ENCODE measurements at regions of chr4 and their contacts with region 1.

Region 1: DNA sequence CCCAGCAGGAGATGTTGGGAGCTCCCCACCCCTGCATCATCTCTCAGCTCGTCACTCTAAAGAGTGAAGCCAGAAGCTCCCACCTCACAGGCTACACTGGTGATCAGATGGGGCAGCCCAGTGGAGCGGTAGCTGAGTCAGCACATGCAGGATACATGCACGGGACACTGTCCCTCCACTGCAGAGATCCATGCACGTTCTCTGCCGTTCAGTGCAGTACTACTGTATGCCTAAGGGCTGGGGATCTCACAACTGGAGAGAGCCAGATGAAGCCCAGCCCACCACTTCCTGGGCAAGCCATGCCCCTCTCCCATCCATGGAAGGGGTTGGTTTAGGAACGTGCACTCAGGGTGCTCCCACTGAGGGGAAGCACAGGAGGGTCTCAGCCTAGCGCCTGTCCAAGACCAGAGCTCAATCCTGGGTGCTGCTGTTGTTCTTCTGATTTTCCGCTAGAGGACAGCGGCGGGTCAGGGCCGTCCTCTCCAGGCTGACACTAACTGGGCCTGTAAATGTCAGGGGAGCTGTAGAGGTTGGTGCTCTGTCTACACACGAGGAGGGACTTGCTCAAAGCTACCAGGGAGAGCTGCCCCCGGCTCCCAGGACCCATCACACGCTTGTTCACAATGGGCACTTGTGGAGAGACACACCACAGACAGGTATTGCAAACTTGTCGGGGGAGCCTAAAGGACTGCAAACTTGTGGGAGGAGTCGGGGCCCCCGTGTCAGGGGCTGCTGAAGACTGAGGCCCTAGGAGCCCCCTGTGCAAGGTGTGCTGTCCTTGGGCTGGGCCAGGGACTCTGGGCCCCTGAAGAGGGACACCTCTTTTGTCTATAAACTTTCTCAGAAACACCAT is 18.2 kb upstream of the ABLIM2 start:
- DNase-seq: peak; percentile 54 to 71 (median 69)
- ATAC-seq: peak; percentile 82
- H3K4me3 ChIP-seq: no peak overlapping the region
- H3K27ac ChIP-seq: no peak overlapping the region
- H3K4me1 ChIP-seq: peaks cover 7% of the 10 kb centered on the region
- H3K27me3 ChIP-seq: no peaks in the 10 kb centered on the region
- CTCF ChIP-seq: peak; percentile 68 to 88 (median 78)
- POLR2A ChIP-seq: no peak

Region 2: DNA sequence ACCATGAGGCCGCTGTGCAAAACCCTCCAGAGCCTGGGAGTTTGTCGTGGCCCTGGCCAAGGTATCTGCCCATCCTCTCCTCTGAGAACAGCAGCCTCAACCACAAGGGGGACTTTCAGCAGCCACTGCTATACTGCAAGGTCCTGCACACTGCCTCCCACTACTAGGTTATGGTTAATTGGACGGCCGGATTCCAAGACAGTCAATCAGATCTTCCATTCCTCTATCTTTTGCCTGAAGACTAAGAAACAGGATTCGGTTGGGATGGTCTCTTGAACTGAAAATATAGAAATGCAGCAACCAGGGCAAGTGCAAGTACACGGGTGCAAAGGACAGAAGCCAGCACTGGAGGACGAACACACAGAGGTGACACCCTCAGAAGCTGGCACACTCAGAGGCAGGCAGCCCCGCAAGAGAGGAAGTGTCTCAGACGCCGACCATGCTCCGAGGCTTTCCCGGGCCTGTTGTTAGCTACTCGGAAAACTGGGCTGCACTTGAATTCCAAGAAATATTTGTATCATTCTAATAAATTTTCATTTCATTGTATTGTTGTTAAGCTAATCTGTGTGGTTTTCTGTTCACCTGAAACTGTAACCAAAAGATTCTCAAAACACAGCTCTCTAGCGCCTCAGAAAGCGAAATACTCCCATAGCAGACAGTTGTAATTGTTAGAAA is 300.4 kb before region 1 on chr4:
- intact Hi-C with region 1: no loop called
- DNase-seq: no peak
- ATAC-seq: no peak
- H3K4me3 ChIP-seq: no peak overlapping the region
- H3K27ac ChIP-seq: no peak overlapping the region
- H3K4me1 ChIP-seq: peaks cover 23% of the 10 kb centered on the region
- H3K27me3 ChIP-seq: no peaks in the 10 kb centered on the region
- CTCF ChIP-seq: no peak
- POLR2A ChIP-seq: no peak

Region 3: DNA sequence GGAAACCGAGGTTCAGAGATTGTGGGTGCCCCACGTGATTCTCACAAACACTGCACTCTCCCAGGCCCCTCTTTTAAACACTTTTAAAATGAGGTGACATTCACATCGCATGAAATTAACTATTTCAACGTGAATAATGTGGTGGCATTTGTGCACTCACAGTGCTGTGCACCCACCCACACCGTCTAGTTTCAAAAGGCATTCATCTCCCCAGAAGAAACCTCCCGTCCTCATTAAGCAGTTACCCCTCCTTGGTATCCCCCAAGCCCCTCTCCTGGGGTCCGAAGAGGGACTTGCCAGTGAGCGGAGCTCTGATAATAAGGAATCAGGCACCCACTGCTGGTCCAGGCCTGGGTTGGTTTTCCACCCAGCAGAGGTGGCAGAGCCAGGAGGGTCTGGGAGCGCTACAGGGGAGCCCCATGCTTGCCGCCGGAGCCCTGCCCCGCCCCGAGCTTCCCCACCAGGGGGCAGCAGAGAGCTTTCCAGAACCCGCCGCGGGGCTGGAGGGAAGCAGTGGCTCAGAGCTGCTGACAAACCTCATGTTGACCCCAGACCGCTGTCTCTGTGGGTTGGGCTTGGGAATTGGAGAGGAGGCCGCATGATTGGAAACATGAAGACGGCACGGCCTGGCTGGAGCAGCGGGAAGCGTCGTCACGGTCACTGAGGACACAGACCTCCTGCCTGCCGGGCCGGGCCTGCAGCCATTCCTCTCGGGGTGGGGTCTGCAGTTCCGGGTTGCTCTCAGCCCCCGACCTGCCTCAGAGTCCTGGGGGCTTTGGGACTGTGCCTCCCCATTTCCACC is 65.3 kb after region 1 on chr4:
- intact Hi-C with region 1: loop called (anchors 5 kb)
- DNase-seq: peak; percentile 73 to 81 (median 76)
- ATAC-seq: peak; percentile 81
- H3K4me3 ChIP-seq: no peak overlapping the region
- H3K27ac ChIP-seq: no peak overlapping the region
- H3K4me1 ChIP-seq: no peaks in the 10 kb centered on the region
- H3K27me3 ChIP-seq: no peaks in the 10 kb centered on the region
- CTCF ChIP-seq: peak; percentile 78 to 98 (median 81)
- POLR2A ChIP-seq: no peak

Region 4: DNA sequence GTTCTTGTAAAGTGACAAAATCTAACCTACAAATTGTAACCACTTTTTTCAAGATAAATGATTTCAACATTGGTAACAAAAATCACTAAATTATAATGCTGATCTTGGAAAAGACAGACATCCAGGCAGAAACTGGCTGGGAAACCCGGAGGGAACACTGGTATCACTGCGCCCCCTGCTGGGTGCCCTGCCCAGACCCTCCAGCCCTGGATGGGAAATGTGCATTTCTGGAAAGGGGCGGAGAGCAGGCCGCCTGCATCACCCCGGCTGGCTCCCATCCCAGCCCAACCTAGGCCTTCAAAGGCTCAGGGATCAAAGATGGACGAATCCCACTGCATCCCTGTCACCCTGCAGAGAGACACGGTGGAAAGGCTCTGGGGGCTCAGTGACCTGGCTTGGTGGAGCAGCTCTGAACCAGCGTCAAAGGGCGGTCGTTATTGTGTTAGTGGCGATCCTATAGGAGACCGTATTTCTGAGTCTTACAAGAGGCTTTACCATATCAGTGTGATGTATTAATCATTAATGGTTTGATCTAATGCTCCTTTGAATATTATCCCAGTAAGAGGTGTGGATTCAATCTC is 226.5 kb after region 1 on chr4:
- intact Hi-C with region 1: loop called (anchors 10 kb)
- DNase-seq: peak; percentile 66 to 79 (median 72)
- ATAC-seq: peak; percentile 73
- H3K4me3 ChIP-seq: no peak overlapping the region
- H3K27ac ChIP-seq: no peak overlapping the region
- H3K4me1 ChIP-seq: no peaks in the 10 kb centered on the region
- H3K27me3 ChIP-seq: no peaks in the 10 kb centered on the region
- CTCF ChIP-seq: peak; percentile 62 to 86 (median 69)
- POLR2A ChIP-seq: no peak

Measured in body of pancreas (tissue), 4 donors.